Activated CD8-positive, alpha-beta T cell treated with anti-CD3 and anti-CD28 coated beads, Interleukin-2, amount 10 ng/mL, durations not matched to agents 7 days and 5 days (primary cell): ENCODE measurements at regions of chr6 and their contacts with region 1.

Region 1: DNA sequence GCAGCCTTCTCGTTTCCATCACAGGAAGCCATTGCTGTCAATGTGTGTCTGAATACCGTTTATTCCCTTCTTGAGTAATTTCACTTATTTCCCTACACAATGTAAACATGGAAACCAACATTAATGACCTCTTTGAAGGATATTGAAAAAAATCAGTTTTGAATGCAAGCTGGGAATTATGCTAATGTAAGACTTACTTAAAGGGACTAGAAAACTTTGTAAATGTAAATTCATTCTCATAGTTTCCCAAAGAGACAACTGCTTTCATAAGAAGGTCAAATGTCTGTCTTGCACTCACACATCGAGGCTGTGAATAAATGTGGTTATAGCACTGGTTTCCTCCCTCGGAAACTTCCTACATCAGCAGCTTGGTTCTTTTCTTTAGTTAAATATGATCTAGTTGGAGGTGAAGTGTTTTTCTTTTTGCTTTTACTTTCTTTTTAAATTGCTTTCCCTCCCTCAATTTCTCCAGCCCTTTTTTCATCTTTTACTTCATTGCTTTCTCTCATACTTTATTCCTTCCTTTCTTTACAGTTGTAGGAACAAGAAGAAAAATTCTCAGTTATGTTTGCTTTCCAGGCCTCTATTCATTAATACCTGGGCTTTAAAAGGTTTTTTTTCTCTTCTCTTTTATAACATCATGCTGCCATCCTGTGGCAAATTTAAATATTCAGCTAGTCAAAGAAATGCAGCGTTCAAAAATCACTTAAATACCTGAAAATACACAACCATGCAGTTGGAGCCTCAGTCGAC is 108.3 kb downstream of the TNFAIP3 start:
- DNase-seq: peak; percentile 59
- ATAC-seq: peak; percentile 86
- H3K4me3 Mint-ChIP-seq: peak overlapping the region; percentile 76
- H3K27ac Mint-ChIP-seq: peak overlapping the region; percentile 92
- H3K4me1 Mint-ChIP-seq: peaks cover 51% of the 10 kb centered on the region
- H3K27me3 Mint-ChIP-seq: no peaks in the 10 kb centered on the region

Region 2: GRCh38 chr6:137661601-137662000 is 313.8 kb before region 1 on chr6:
- CTCF ChIA-PET with region 1: interaction called, 10 read pairs
- POLR2A ChIA-PET with region 1: no interaction called
- DNase-seq: peak; percentile 66
- ATAC-seq: peak; percentile 57
- H3K4me3 Mint-ChIP-seq: no peak overlapping the region
- H3K27ac Mint-ChIP-seq: no peak overlapping the region
- H3K4me1 Mint-ChIP-seq: peaks cover 28% of the 10 kb centered on the region
- H3K27me3 Mint-ChIP-seq: no peaks in the 10 kb centered on the region

Region 3: GRCh38 chr6:137791281-137792159 is 183.8 kb before region 1 on chr6:
- CTCF ChIA-PET with region 1: interaction called, 10 read pairs
- POLR2A ChIA-PET with region 1: no interaction called
- DNase-seq: no peak
- ATAC-seq: no peak
- H3K4me3 Mint-ChIP-seq: peak overlapping the region; percentile 46
- H3K27ac Mint-ChIP-seq: no peak overlapping the region
- H3K4me1 Mint-ChIP-seq: peaks cover 60% of the 10 kb centered on the region
- H3K27me3 Mint-ChIP-seq: no peaks in the 10 kb centered on the region

Region 4: GRCh38 chr6:137878486-137879285 is 96.7 kb before region 1 on chr6:
- CTCF ChIA-PET with region 1: interaction called, 191 read pairs
- POLR2A ChIA-PET with region 1: interaction called, 4 read pairs
- DNase-seq: no peak
- ATAC-seq: no peak
- H3K4me3 Mint-ChIP-seq: no peak overlapping the region
- H3K27ac Mint-ChIP-seq: peak overlapping the region; percentile 46
- H3K4me1 Mint-ChIP-seq: peaks cover 75% of the 10 kb centered on the region
- H3K27me3 Mint-ChIP-seq: no peaks in the 10 kb centered on the region

Region 5: DNA sequence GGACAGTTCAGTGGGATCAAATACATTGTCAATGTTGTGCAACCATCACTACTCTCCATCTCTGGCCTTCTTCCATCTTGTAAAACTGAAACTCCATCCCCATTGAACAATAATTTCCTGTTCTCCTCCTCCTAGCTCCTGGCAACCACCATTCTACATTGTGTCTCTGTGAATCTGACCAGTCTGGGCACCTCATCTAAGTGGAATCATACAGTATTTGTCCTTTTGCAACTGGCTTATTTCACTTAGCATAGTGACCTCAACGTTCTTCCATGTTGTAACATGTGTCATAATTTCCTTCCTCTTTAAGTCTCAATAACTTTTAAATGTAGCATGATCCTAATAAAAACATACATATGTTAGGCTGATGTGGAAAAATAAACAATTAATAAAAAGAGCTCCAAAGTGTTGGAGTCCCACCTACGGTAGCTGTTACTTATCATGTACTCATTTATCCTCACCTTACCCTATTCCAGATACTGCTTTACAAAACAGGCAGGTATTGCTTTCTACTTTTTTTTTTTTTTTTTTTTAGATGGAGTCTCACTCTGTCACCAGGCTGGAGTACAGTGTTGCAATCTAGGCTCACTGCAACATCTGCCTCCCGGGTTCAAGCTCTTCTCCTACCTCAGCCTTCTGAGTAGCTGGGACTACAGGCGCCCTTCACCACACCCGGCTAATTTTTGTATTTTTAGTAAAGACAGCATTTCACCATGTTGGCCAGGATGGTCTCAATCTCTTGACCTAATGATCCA is 16.4 kb before region 1 on chr6:
- CTCF ChIA-PET with region 1: interaction called, 14 read pairs
- POLR2A ChIA-PET with region 1: interaction called, 3 read pairs
- DNase-seq: no peak
- ATAC-seq: no peak
- H3K4me3 Mint-ChIP-seq: no peak overlapping the region
- H3K27ac Mint-ChIP-seq: no peak overlapping the region
- H3K4me1 Mint-ChIP-seq: peaks cover 13% of the 10 kb centered on the region
- H3K27me3 Mint-ChIP-seq: no peaks in the 10 kb centered on the region

Region 6: DNA sequence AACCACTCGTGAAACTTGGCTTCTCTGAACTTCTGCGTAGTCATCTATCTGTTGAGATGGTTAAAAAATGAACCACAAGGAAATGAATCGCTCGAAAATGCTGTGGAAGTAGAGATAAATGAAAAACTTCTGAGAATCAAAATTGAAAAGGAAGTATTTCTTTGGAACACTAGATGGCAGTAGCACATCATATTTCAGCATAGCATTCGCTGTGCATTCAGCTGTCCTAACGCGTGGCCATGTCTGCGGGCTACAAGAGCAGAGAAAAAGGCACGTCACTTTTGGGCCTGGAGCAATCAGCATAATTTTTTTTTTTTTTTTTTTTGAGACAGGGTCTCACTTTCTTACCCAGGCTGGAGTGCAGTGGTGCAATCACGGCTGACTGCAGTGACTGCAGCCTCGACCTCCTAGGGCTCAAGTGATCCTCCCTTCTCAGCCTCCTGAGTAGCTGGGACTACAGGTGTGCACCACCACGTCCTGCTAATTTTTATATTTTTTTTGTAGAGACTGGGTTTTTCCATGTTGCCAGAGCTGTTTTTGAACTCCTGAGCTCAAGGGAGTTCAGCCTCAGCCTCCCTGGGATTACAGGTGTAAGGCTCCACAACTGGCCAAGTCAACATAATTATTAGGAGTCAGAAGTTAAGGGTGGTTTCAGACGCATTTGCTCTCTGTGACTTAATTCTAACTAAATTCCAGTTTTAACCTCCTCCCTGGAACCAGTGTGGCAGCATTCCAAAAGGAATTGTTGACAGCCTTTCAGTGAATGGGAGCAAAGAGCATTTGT is 140.7 kb after region 1 on chr6:
- CTCF ChIA-PET with region 1: no interaction called
- POLR2A ChIA-PET with region 1: no interaction called
- DNase-seq: peak; percentile 58
- ATAC-seq: peak; percentile 83
- H3K4me3 Mint-ChIP-seq: no peak overlapping the region
- H3K27ac Mint-ChIP-seq: no peak overlapping the region
- H3K4me1 Mint-ChIP-seq: peaks cover 6% of the 10 kb centered on the region
- H3K27me3 Mint-ChIP-seq: peaks cover 49% of the 10 kb centered on the region